HEK293 (cell line): ENCODE measurements at regions of chr9 and their contacts with region 1.

Region 1: DNA sequence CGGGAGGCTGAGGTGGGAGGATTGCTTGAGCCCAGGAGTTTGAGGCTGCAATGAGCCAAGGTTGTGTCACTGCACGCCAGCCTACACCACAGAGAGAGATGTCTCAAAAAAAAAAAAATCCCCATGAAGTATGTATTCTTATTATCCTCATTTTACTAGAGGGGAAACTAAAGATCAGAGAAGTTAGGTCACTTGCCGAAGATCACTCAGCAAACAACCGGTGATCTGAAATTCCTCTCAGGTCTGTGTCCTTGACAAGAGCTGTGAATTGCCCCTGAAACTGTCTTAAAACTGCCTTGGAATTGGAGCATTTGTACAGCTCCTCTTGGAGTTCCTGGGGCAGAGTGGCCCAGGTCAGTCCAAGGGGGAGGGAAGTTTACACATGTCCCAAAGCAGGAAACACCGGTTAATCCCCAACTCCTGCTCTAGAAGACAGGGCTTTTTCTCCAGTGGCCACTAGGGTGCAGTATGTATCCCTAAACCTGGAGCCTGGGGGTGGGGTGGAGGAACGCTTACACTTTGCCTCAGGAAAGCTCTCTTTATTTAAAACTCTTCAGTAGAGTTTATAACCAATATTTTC is 27.6 kb downstream of the AQP7 start:
- H3K4me3 ChIP-seq: no peak overlapping the region
- H3K27ac ChIP-seq: no peak overlapping the region
- H3K4me1 ChIP-seq: no peaks in the 10 kb centered on the region
- CTCF ChIP-seq: no peak; the same call in 1 of the 2 replicates

Region 2: DNA sequence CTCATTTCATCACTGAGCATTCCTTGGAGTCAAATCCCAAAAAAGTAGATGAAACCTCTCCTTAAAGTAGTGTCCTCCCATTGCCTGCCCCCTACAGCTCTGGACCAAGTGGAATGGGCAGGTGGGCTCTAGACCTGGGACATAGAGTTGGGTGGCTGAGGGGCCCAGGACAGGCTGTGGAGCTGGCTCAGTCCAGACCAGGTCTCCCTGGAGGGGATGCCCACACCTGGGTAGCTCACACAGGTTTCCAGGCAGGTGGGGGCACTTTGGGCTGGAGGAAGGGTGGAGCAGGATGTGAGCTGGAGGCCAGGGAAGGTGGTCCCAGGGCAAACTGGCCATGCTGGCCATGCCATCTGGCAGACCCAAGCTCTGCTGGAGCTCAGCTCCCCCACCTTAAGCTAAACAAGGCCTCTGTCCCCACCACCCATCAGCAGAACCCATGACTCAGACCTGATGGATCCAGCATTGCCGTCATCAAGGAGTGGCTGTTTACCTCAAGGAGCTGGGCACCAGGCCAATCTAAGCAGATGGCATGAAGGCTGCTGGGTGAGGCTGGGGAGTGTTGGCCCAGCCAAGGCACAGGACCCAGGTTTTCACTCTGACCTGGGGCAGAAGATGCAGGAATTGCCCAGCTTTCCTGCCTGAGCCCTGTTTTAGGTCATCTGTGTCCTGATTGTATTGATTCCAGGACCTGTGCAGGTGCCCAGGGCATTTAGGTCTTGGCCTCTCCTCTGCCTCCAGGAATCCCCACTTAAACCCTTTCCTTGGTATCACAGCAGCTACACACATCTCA is 140.8 kb before region 1 on chr9:
- CTCF ChIA-PET with region 1: no interaction called
- POLR2A ChIA-PET with region 1: no interaction called
- H3K4me3 ChIP-seq: no peak overlapping the region
- H3K27ac ChIP-seq: no peak overlapping the region
- H3K4me1 ChIP-seq: peaks cover 6% of the 10 kb centered on the region
- CTCF ChIP-seq: no peak

Region 3: GRCh38 chr9:33350310-33350709 is 24.4 kb before region 1 on chr9:
- CTCF ChIA-PET with region 1: interaction called, 20 read pairs
- POLR2A ChIA-PET with region 1: no interaction called
- H3K4me3 ChIP-seq: no peak overlapping the region
- H3K27ac ChIP-seq: no peak overlapping the region
- H3K4me1 ChIP-seq: peaks cover 11% of the 10 kb centered on the region
- CTCF ChIP-seq: no peak

Region 4: GRCh38 chr9:33364127-33364526 is 10.6 kb before region 1 on chr9:
- CTCF ChIA-PET with region 1: interaction called, 22 read pairs
- POLR2A ChIA-PET with region 1: no interaction called
- H3K4me3 ChIP-seq: no peak overlapping the region
- H3K27ac ChIP-seq: no peak overlapping the region
- H3K4me1 ChIP-seq: no peaks in the 10 kb centered on the region
- CTCF ChIP-seq: no peak

Region 5: DNA sequence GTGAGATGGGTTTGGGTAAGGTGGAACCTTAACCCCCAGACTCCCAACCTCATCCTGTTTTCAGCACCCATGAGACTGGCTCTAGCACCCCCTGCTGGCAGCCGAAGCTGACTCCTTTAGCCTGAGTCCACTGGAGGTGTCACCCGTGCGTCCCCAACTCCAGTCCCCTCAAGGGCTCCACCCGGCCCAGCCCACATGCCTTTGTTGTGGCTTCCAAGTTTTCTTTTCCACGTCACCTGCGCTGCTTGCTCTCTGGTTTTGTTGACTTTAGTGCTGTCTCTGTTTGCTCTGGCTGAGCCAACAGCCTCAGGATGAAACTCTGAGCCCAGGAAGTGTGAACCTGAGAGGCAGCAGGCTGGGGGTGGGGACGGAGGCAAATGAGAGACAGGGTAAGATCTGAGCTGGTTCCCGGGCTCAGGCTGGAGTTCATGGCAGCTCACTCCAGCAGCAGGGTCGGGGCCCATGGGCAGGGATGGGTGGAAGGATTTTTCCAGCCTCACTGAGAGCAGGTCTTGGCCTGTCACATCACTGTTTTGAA is 40.8 kb after region 1 on chr9:
- CTCF ChIA-PET with region 1: interaction called, 20 read pairs
- POLR2A ChIA-PET with region 1: no interaction called
- H3K4me3 ChIP-seq: no peak overlapping the region
- H3K27ac ChIP-seq: no peak overlapping the region
- H3K4me1 ChIP-seq: 0 out of 2 replicates have a peak, but pooled peaks cover 3% of the 10 kb centered on the region
- CTCF ChIP-seq: peak; percentile 72

Region 6: GRCh38 chr9:33458444-33458843 is 83.7 kb after region 1 on chr9:
- CTCF ChIA-PET with region 1: interaction called, 111 read pairs
- POLR2A ChIA-PET with region 1: interaction called, 4 read pairs
- H3K4me3 ChIP-seq: no peak overlapping the region
- H3K27ac ChIP-seq: no peak overlapping the region
- H3K4me1 ChIP-seq: no peaks in the 10 kb centered on the region
- CTCF ChIP-seq: no peak

Region 7: DNA sequence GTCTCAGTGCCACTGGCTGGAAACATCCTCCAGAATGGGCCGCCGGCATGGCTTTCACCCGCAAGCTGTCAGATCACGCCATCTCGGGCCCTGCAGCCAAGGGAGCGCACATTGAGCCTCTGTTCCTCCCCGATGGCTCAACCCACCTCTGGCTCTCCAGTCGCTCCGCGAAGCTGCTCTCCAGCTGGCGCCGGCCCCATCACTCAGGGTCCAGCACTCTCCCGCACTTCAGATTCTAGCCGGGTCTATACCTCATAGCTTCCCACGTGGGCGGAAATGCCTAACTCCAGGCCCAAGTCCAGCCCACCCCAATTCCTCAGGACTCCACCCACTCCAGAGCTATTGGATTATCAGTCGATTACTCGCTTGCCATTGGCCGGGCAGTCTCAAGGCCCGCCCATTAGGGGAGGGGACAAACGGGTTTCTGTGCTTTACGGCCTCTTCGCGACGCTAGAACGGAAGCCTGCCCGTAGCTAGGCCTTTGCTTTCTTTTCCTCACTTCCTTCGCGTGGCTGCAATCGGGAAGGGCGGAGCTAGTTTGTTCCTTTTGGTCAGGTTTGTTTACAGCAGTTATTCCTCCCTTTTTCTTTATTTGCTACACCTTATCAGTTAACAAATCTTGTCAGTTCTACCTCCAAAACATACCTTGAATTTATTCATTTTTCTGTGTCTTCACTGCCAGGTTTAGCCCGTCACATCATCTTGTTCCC is 99.1 kb after region 1 on chr9 and contains the start of gene NOL6:
- CTCF ChIA-PET with region 1: interaction called, 111 read pairs
- POLR2A ChIA-PET with region 1: interaction called, 8 read pairs
- H3K4me3 ChIP-seq: peak within 1 kb of the TSS; percentile 91
- H3K27ac ChIP-seq: no peak within 1 kb of the TSS
- H3K4me1 ChIP-seq: no peaks in the 10 kb centered on the region
- CTCF ChIP-seq: no peak